OCI-LY7 (cell line): ENCODE measurements at regions of chr11 and their contacts with region 1.

Region 1: DNA sequence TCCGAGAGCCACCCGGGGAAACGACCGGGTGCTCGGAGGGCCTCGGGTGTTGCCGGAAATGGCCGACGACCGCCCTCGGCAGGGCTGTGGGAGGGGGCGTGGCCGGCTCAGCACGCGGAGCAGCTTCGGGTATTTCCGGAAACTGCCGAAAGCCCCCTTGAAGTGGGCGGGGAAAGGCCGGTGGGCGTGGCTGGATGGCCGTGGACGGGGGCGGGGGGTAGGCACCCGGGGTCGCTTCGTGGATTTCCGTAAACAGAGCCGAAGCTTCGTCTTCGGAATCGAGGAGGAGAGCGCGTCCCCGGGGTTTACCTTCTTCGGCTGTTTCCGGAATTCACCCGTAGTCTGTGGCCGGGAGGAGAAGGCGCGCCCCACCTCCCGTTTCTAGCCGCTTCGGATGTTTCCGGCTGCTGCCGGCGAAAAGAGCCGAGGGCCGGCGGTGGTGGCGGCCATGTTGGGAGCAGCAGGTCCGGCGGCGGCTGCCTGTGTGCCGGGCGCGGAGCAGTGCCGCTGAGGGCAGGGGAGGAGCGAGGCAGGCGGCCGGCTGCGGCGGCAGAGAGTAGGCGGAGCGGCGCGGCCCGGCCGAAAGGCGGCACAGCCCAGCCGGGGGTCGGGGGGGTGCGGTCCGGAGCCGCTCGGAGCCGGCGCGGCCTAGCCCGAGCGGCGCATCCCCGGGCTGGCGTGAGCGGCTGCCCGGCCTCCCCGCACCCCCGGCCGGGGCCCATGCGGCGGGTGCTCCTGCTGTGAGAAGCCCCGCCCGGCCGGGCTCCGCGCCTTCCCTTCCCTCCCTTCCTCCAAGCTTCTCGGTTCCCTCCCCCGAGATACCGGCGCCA is at the start of gene MARK2:
- DNase-seq: peak; percentile 99
- H3K4me3 ChIP-seq: peak within 1 kb of the TSS; percentile 97
- H3K27ac ChIP-seq: peak within 1 kb of the TSS; percentile 84
- H3K4me1 ChIP-seq: peaks cover 42% of the 10 kb centered on the region
- CTCF ChIP-seq: no peak
- total RNA-seq, gene MARK2: 20.8 and 22.7 TPM in 2 replicates

Region 2: GRCh38 chr11:63862923-63863322 is 24.0 kb after region 1 on chr11:
- CTCF ChIA-PET with region 1: no interaction called
- POLR2A ChIA-PET with region 1: interaction called, 11 read pairs
- intact Hi-C with region 1: loop called (anchors 2 kb)
- DNase-seq: no peak
- H3K4me3 ChIP-seq: no peak overlapping the region
- H3K27ac ChIP-seq: no peak overlapping the region
- H3K4me1 ChIP-seq: peaks cover 20% of the 10 kb centered on the region
- CTCF ChIP-seq: no peak

Region 3: DNA sequence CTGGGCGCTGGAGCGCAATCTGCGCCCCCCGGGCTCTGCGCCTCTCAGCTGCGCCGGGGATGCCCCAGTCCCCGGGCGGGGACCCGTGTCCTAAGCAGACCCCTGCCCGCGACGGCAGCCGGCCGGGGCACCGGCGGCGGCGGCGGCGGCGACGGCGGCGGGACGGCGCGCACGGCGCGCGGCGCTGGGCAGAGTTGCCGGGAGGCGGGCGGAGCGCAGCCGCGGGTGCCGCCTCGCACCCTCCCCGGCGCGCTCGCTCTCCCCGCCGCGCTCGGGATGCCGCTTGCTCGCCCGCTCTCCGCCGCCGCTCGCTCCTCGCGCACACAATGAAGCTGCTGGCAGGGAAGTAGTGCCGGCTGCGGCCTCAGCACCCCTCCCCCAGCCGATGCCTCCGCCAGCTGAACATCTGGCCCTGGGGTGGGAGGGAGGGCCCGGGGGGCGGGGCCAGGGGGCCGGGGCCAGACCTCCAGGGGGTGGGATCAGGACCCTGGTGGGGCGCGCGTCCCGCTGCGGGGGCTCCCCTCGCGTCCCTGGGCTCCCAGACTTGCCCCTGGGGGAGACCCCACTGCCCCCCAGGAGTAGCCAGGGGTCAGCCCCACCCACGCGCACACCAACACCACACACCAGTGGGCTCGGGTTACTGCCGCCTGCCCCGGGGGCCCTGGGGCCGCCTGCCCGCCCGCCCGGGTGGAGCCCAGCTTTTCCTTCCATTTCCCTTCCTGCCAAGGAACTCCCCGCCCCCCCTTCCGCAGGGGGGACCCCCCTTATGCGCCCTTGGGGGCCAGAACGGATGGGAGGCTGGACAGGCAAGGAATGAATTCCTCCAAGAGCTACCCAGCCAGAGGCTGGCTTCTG is 78.2 kb after region 1 on chr11 and contains the start of gene RCOR2:
- CTCF ChIA-PET with region 1: interaction called, 4 read pairs
- POLR2A ChIA-PET with region 1: no interaction called
- intact Hi-C with region 1: loop called (anchors 2 kb)
- DNase-seq: peak; percentile 91
- H3K4me3 ChIP-seq: peak within 1 kb of the TSS; percentile 71
- H3K27ac ChIP-seq: peak within 1 kb of the TSS; percentile 29
- H3K4me1 ChIP-seq: peaks cover 32% of the 10 kb centered on the region
- CTCF ChIP-seq: no peak
- total RNA-seq, gene RCOR2: 2.1 and 2.4 TPM in 2 replicates

Region 4: GRCh38 chr11:63945477-63946163 is 106.7 kb after region 1 on chr11:
- CTCF ChIA-PET with region 1: interaction called, 17 read pairs
- POLR2A ChIA-PET with region 1: interaction called, 3 read pairs
- intact Hi-C with region 1: loop called (anchors 1 kb)
- DNase-seq: peak; percentile 62
- H3K4me3 ChIP-seq: no peak overlapping the region
- H3K27ac ChIP-seq: no peak overlapping the region
- H3K4me1 ChIP-seq: peaks cover 6% of the 10 kb centered on the region
- CTCF ChIP-seq: peak; percentile 83

Region 5: DNA sequence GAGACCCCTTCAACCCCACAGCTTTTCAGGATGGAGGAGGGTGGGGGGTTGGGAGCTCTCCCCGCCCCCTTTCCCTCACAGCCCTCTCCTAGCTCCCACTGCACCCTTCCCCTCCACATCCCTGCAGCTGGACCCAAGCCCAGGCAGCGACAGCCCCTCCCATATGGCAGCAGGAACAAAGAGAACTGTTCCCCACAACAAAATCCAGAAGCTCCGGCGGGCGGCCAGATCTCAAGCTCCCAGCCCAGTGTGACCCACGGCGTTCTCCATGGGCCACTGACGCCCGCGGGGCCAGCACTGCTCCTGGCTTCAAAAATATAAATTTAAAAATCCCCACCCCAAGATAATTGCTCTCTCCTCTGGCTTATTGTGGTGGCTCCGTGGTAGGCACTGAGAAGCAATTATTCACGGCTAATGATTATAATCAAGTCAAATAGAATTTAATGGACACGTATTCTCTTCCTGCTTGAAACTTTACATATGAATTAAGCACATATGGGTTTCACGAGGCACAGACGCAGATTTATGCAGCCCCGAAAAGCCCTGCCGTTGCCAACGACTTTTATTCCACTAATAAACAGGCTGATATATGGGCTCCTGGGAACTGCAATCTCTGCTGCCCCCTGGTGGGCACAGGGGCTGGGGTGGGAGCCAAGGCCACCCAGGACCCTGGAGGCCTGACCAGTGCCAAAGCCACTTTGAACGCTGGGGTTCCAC is 309.5 kb after region 1 on chr11:
- CTCF ChIA-PET with region 1: no interaction called
- POLR2A ChIA-PET with region 1: no interaction called
- intact Hi-C with region 1: loop called (anchors 1 kb)
- DNase-seq: peak; percentile 74
- H3K4me3 ChIP-seq: no peak overlapping the region
- H3K27ac ChIP-seq: no peak overlapping the region
- H3K4me1 ChIP-seq: peaks cover 6% of the 10 kb centered on the region
- CTCF ChIP-seq: peak; percentile 98